ENCODE measurements at regions of chr5 and their contacts with region 1.

Region 1: DNA sequence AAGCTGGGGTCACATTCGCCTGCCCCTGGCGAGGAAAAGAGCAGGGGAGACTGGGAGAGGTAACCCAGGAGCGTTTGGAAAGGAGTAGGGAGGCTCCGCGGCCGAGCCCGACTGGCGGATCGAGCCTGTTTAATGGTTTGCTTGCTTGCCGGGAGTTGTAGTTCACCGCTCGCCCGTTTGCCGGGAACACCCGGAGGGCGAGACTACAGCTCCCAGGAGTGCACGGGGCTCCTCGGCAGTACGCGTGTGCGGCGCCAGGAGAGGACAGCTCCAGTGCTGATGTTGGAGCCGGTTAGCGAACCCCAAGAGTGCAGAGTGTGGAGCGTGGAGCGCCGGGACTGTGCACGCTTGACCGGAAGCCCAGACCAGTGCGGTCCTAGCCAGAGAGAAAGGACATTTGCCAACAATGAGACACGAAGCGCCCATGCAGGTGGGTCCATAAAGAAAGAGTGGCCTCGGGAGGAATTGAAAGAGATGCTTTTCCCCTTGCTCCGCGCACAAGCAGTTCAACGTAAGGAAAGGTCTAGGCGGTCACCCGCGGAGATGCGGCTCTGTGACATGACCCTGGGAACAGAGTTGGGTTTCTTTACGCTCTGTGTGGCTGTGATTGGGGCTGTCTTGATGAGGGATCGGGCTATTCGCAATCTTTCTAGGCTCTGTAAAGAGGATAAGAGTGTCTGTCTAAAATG is at the start of gene RAB3C:
- DNase-seq: peak; percentile 25
- ATAC-seq: peak; percentile 100
- H3K4me3 ChIP-seq: peak within 1 kb of the TSS; percentile 42; the same call in 1 of the 2 replicates
- H3K27ac ChIP-seq: no peak within 1 kb of the TSS
- H3K4me1 ChIP-seq: no peaks in the 10 kb centered on the region
- H3K27me3 ChIP-seq: peaks cover 9 to 10% of the 10 kb centered on the region in 2 experiments
- CTCF ChIP-seq: no peak
- EP300 ChIP-seq: no peak
- POLR2A ChIP-seq: no peak
- RAD21 ChIP-seq: no peak
- polyA plus RNA-seq, gene RAB3C: not detected

Region 2: DNA sequence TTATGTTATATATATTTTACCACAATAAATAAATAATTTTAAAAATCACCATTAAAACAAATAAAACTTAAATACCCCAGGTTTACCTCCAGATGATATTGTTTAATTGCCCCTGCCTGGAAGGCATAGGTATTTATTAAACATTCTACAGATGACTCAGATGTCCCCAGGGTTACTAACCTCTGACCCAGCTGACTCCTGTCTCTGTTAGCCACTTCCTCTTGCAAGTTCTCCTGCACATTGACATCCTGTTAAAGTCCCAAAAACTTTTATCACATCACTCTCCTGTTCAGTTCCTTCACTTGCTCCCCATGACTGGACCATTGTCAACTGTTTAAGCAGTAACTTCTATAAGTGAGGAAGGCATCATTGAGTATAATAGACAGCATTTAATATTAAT is 37.0 kb before region 1 on chr5:
- CTCF ChIA-PET with region 1: no interaction called
- POLR2A ChIA-PET with region 1: no interaction called
- RAD21 ChIA-PET with region 1: no interaction called
- SMC1A ChIA-PET with region 1: no interaction called
- in situ Hi-C with region 1: no loop called
- intact Hi-C with region 1: loop called (anchors 5 kb)
- DNase-seq: no peak
- ATAC-seq: peak; percentile 57
- H3K4me3 ChIP-seq: no peak overlapping the region
- H3K27ac ChIP-seq: no peak overlapping the region
- H3K4me1 ChIP-seq: no peaks in the 10 kb centered on the region
- H3K27me3 ChIP-seq: no peaks in the 10 kb centered on the region
- CTCF ChIP-seq: no peak
- EP300 ChIP-seq: no peak
- POLR2A ChIP-seq: no peak
- RAD21 ChIP-seq: no peak

Region 3: DNA sequence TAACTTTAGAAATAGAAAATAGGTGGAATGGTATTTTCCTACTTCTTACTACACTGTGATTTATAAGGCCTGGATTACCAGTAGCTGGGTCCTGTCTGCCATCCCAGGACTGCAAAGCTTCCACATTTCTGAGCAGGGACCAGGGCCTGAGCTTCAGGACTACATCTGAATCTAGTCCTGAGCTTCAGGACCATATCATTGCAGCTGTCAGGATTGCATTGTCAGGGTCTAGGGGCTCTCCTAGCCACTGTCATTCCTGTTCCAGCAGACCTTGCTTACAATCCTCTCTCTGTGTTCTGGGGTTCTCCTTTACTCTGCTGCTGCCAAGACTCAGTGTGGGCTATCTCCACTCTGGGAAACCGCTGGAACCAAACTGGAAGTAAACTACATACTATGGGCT is 16.3 kb after region 1 on chr5:
- CTCF ChIA-PET with region 1: no interaction called
- POLR2A ChIA-PET with region 1: no interaction called
- RAD21 ChIA-PET with region 1: no interaction called
- SMC1A ChIA-PET with region 1: no interaction called
- in situ Hi-C with region 1: no loop called
- intact Hi-C with region 1: no loop called
- DNase-seq: no peak
- ATAC-seq: no peak
- H3K4me3 ChIP-seq: no peak overlapping the region
- H3K27ac ChIP-seq: no peak overlapping the region
- H3K4me1 ChIP-seq: no peaks in the 10 kb centered on the region
- H3K27me3 ChIP-seq: no peaks in the 10 kb centered on the region
- CTCF ChIP-seq: no peak
- EP300 ChIP-seq: no peak
- POLR2A ChIP-seq: no peak
- RAD21 ChIP-seq: no peak

Measured in GM12878 (cell line).